ENCODE measurements at regions of chr3 and their contacts with region 1.

Region 1: DNA sequence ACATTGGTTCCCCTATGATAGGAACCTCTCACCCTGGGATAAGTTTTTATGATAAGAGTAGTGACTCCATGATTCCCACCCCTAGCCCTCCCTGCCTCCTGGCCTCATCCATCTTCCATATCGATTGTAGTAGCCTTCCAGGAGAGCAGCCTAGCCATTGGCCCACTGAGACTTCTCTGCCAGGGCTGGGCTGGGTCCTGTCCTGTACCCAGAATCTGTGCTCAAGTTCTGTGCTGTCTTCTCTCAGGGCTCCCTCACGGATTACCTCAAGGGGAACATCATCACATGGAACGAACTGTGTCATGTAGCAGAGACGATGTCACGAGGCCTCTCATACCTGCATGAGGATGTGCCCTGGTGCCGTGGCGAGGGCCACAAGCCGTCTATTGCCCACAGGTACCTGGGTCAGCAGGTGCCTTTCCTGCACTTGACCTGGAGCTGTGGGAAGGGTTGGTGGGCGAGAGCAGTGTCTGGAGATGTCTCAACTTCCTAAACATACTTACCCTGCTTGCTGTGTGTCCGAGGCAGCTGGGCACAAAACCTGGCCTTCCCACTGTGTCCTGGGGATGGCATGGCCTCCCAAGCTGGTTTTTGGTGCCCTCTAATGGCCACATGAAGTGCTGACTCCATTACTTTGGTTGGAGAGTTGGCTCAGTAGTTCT is 16.6 kb upstream of the EXOG start:
- DNase-seq: peak; percentile 75
- H3K4me3 Mint-ChIP-seq: no peak overlapping the region
- H3K27ac Mint-ChIP-seq: no peak overlapping the region
- H3K4me1 Mint-ChIP-seq: no peaks in the 10 kb centered on the region
- H3K27me3 Mint-ChIP-seq: no peaks in the 10 kb centered on the region
- CTCF ChIP-seq: peak; percentile 90

Region 2: DNA sequence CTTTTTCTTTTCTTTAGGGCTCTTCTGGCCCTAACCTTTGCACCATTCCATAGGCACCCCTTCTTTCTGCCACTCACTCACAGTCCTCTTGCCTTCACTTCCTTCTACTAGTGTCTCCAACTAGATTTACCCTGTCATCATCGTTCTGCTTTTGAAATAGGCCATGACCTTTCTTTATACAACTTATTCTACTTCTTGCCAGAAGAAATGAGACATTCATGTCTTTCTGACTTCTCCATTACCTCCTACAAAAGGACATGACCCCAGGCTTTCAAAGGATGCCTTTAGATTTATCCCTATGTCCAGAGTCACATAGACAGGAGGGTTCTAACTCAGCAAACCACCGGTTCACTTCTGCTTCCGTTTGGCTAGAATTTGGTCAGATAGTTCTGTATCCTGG is 968.8 kb before region 1 on chr3:
- CTCF ChIA-PET with region 1: no interaction called
- POLR2A ChIA-PET with region 1: no interaction called
- intact Hi-C with region 1: no loop called
- DNase-seq: no peak
- H3K4me3 Mint-ChIP-seq: no peak overlapping the region
- H3K27ac Mint-ChIP-seq: no peak overlapping the region
- H3K4me1 Mint-ChIP-seq: no peaks in the 10 kb centered on the region
- H3K27me3 Mint-ChIP-seq: peaks cover 32% of the 10 kb centered on the region
- CTCF ChIP-seq: no peak

Region 3: GRCh38 chr3:38131621-38132369 is 347.8 kb before region 1 on chr3:
- CTCF ChIA-PET with region 1: interaction called, 7 read pairs
- POLR2A ChIA-PET with region 1: interaction called, 3 read pairs
- intact Hi-C with region 1: loop called (anchors 5 kb)
- DNase-seq: peak; percentile 60
- H3K4me3 Mint-ChIP-seq: no peak overlapping the region
- H3K27ac Mint-ChIP-seq: no peak overlapping the region
- H3K4me1 Mint-ChIP-seq: peaks cover 30% of the 10 kb centered on the region
- H3K27me3 Mint-ChIP-seq: no peaks in the 10 kb centered on the region
- CTCF ChIP-seq: peak; percentile 51

Region 4: GRCh38 chr3:38346587-38347410 is 132.8 kb before region 1 on chr3 and contains the start of gene XYLB:
- CTCF ChIA-PET with region 1: interaction called, 117 read pairs
- POLR2A ChIA-PET with region 1: interaction called, 8 read pairs
- intact Hi-C with region 1: loop called (anchors 2 kb)
- DNase-seq: peak; percentile 83
- H3K4me3 Mint-ChIP-seq: peak within 1 kb of the TSS; percentile 69
- H3K27ac Mint-ChIP-seq: no peak within 1 kb of the TSS
- H3K4me1 Mint-ChIP-seq: peaks cover 8% of the 10 kb centered on the region
- H3K27me3 Mint-ChIP-seq: no peaks in the 10 kb centered on the region
- CTCF ChIP-seq: peak; percentile 77
- total RNA-seq, gene XYLB: 4.4 and 6.6 TPM in 2 replicates

Region 5: DNA sequence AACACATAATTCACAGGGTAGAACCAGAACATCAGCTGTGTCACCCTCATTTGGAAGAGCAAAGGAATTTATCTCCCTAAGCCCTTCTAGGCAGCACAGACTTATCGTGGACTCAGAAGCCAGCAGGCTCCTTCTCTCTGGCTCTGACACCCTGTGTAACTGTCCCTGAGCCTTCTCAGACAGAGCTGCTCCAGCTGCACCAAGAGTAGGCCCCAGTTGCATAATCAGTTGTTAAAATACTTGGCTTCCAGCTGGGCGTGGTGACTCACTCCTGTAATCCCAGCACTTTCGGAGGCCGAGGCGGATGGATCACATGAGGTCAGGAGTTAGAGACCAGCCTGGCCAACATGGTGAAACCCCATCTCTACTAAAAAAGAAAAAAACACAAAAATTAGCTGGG is 75.3 kb before region 1 on chr3:
- CTCF ChIA-PET with region 1: interaction called, 13 read pairs
- POLR2A ChIA-PET with region 1: interaction called, 4 read pairs
- intact Hi-C with region 1: no loop called
- DNase-seq: peak; percentile 89
- H3K4me3 Mint-ChIP-seq: no peak overlapping the region
- H3K27ac Mint-ChIP-seq: no peak overlapping the region
- H3K4me1 Mint-ChIP-seq: peaks cover 11% of the 10 kb centered on the region
- H3K27me3 Mint-ChIP-seq: no peaks in the 10 kb centered on the region
- CTCF ChIP-seq: no peak

Region 6: DNA sequence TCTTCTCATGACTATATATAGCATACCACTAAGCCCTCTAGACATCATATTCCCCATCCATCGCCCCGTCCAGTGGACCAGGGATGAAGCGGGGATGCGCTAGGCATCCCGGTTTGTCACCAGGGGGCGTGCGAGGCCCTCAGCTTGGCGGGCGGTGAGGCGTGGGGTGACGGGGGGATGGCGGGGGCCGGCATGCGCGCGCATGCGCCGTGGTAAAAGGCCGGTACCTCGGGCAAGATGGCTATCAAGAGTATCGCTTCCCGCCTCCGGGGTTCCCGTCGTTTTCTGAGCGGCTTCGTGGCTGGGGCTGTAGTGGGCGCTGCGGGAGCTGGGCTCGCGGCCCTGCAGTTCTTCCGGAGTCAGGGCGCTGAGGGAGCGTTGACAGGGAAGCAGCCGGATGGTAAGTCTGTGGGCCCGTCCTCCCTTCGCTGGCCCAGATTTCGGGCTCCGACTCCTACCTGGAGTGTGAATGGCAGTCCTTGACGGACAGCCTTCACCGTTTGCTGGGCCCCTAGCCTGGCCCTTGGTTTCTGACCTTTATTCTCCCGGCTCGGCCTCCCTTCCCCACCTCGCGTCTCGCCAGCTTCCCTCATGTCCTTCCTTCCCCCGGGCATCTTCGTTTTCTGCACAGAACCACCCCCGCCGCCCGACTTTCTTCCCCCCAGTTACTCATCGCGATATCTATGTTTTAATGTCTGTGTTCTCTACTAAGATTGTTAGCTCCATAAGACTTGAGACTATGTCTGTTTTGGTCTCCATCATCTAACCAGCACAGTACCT is 16.8 kb after region 1 on chr3 and contains the start of gene EXOG:
- CTCF ChIA-PET with region 1: interaction called, 15 read pairs
- POLR2A ChIA-PET with region 1: interaction called, 3 read pairs
- intact Hi-C with region 1: no loop called
- DNase-seq: peak; percentile 91
- H3K4me3 Mint-ChIP-seq: peak within 1 kb of the TSS; percentile 78
- H3K27ac Mint-ChIP-seq: peak within 1 kb of the TSS; percentile 33
- H3K4me1 Mint-ChIP-seq: peaks cover 9% of the 10 kb centered on the region
- H3K27me3 Mint-ChIP-seq: no peaks in the 10 kb centered on the region
- CTCF ChIP-seq: peak; percentile 82
- total RNA-seq, gene EXOG: 17.5 and 21.9 TPM in 2 replicates

Region 7: GRCh38 chr3:38689774-38690173 is 210.2 kb after region 1 on chr3:
- CTCF ChIA-PET with region 1: no interaction called
- POLR2A ChIA-PET with region 1: no interaction called
- intact Hi-C with region 1: no loop called
- DNase-seq: no peak
- H3K4me3 Mint-ChIP-seq: no peak overlapping the region
- H3K27ac Mint-ChIP-seq: no peak overlapping the region
- H3K4me1 Mint-ChIP-seq: no peaks in the 10 kb centered on the region
- H3K27me3 Mint-ChIP-seq: peaks cover 16% of the 10 kb centered on the region
- CTCF ChIP-seq: no peak